CD4-positive, alpha-beta T cell (primary cell): ENCODE measurements at regions of chr14 and their contacts with region 1.

Region 1: GRCh38 chr14:94001501-94002396 is 4.6 kb downstream of the CCDC197 start:
- DNase-seq: peak; percentile 29 to 82 (median 48)
- ATAC-seq: peak; percentile 86
- H3K4me3 ChIP-seq: no peak overlapping the region
- H3K4me3 Mint-ChIP-seq: no peak overlapping the region
- H3K27ac ChIP-seq: no peak overlapping the region
- H3K27ac Mint-ChIP-seq: no peak overlapping the region
- H3K4me1 ChIP-seq: peaks cover 12% of the 10 kb centered on the region
- H3K4me1 Mint-ChIP-seq: peaks cover 8% of the 10 kb centered on the region
- H3K27me3 ChIP-seq: peaks cover 0 to 6% of the 10 kb centered on the region in 2 experiments
- H3K27me3 Mint-ChIP-seq: peaks cover 13% of the 10 kb centered on the region
- CTCF ChIP-seq: peak; percentile 97

Region 2: GRCh38 chr14:93655078-93655750 is 346.5 kb before region 1 on chr14:
- CTCF ChIA-PET with region 1: no interaction called
- POLR2A ChIA-PET with region 1: no interaction called
- intact Hi-C with region 1: loop called in 1 of 2 experiments (anchors 10 kb)
- DNase-seq: peak in 3 of 14 experiments; percentile 15 to 20 (median 15)
- ATAC-seq: no peak
- H3K4me3 ChIP-seq: no peak overlapping the region
- H3K4me3 Mint-ChIP-seq: no peak overlapping the region
- H3K27ac ChIP-seq: no peak overlapping the region
- H3K27ac Mint-ChIP-seq: no peak overlapping the region
- H3K4me1 ChIP-seq: no peaks in the 10 kb centered on the region
- H3K4me1 Mint-ChIP-seq: no peaks in the 10 kb centered on the region
- H3K27me3 ChIP-seq: peaks cover 0 to 13% of the 10 kb centered on the region in 2 experiments
- H3K27me3 Mint-ChIP-seq: peaks cover 53% of the 10 kb centered on the region
- CTCF ChIP-seq: peak; percentile 18

Region 3: GRCh38 chr14:93970549-93970946 is 31.2 kb before region 1 on chr14:
- CTCF ChIA-PET with region 1: interaction called, 14 read pairs
- POLR2A ChIA-PET with region 1: interaction called, 5 read pairs
- intact Hi-C with region 1: loop called in 1 of 2 experiments (anchors 2 kb)
- DNase-seq: peak; percentile 61 to 87 (median 70)
- ATAC-seq: peak; percentile 95
- H3K4me3 ChIP-seq: peak overlapping the region; percentile 59
- H3K4me3 Mint-ChIP-seq: peak overlapping the region; percentile 93
- H3K27ac ChIP-seq: no peak overlapping the region
- H3K27ac Mint-ChIP-seq: peak overlapping the region; percentile 28
- H3K4me1 ChIP-seq: peaks cover 75% of the 10 kb centered on the region
- H3K4me1 Mint-ChIP-seq: peaks cover 32% of the 10 kb centered on the region
- H3K27me3 ChIP-seq: no peaks in the 10 kb centered on the region
- H3K27me3 Mint-ChIP-seq: no peaks in the 10 kb centered on the region
- CTCF ChIP-seq: peak; percentile 72

Region 4: GRCh38 chr14:93975791-93976476 is 25.8 kb before region 1 on chr14:
- CTCF ChIA-PET with region 1: interaction called, 14 read pairs
- POLR2A ChIA-PET with region 1: interaction called, 12 read pairs
- intact Hi-C with region 1: loop called in 1 of 2 experiments (anchors 2 kb)
- DNase-seq: peak in 2 of 14 experiments; percentile 48 to 52
- ATAC-seq: no peak
- H3K4me3 ChIP-seq: peak overlapping the region; percentile 17
- H3K4me3 Mint-ChIP-seq: peak overlapping the region; percentile 8
- H3K27ac ChIP-seq: no peak overlapping the region
- H3K27ac Mint-ChIP-seq: peak overlapping the region; percentile 66
- H3K4me1 ChIP-seq: peaks cover 88% of the 10 kb centered on the region
- H3K4me1 Mint-ChIP-seq: peaks cover 67% of the 10 kb centered on the region
- H3K27me3 ChIP-seq: no peaks in the 10 kb centered on the region
- H3K27me3 Mint-ChIP-seq: no peaks in the 10 kb centered on the region
- CTCF ChIP-seq: no peak

Region 5: GRCh38 chr14:94041551-94042346 is 40.0 kb after region 1 on chr14:
- CTCF ChIA-PET with region 1: no interaction called
- POLR2A ChIA-PET with region 1: no interaction called
- intact Hi-C with region 1: no loop called
- DNase-seq: no peak
- ATAC-seq: no peak
- H3K4me3 ChIP-seq: no peak overlapping the region
- H3K4me3 Mint-ChIP-seq: no peak overlapping the region
- H3K27ac ChIP-seq: no peak overlapping the region
- H3K27ac Mint-ChIP-seq: peak overlapping the region; percentile 25
- H3K4me1 ChIP-seq: peaks cover under 1% of the 10 kb centered on the region
- H3K4me1 Mint-ChIP-seq: peaks cover 1% of the 10 kb centered on the region
- H3K27me3 ChIP-seq: no peaks in the 10 kb centered on the region
- H3K27me3 Mint-ChIP-seq: no peaks in the 10 kb centered on the region
- CTCF ChIP-seq: no peak